ENCODE measurements at regions of chr3 and their contacts with region 1.

Region 1: DNA sequence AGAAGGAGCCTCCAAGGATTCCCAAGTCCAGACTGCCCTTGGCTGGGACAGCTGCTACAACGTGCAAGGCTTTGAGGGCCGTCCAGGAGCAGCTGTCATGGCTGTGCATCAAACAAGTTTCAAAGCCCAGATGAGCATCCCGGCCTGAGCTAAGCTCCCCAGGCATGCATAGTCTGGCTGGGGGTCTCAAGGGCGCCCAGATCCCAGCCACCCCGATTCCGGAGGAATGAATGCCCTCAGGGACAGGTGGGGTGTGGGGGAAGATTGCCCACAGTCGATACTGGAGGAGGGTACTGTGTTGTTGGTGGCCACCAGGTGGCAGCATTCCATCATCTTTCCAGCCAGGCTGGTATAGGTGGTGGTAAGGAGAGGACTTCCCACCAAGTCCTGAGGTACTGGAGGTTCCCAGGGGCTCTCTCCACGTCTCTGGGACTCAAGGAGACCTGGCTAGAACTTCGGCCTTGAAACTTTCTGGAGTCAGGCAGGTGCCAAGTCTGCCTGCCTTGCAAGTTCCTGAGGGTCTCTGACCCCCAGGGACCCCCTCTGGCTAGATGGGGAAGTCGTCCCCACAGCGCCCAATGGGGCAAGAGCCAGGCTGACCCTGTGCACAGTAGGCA is 32.8 kb downstream of the RBM5 start:
- DNase-seq: peak; percentile 77 to 83 (median 80)
- ATAC-seq: peak; percentile 96
- H3K4me3 ChIP-seq: no peak overlapping the region
- H3K27ac ChIP-seq: no peak overlapping the region
- H3K4me1 ChIP-seq: peaks cover 0 to 9% of the 10 kb centered on the region in 2 experiments; a peak in 2 of 5 replicates
- H3K27me3 ChIP-seq: no peaks in the 10 kb centered on the region
- CTCF ChIP-seq: peak; percentile 68 to 83 (median 80)
- EP300 ChIP-seq: no peak
- POLR2A ChIP-seq: peak; percentile 56; the same call in 1 of the 2 replicates
- RAD21 ChIP-seq: peak; percentile 56 to 81

Region 2: GRCh38 chr3:50136714-50137405 is 15.3 kb after region 1 on chr3:
- CTCF ChIA-PET with region 1: no interaction called
- POLR2A ChIA-PET with region 1: interaction called, 10 read pairs
- in situ Hi-C with region 1: no loop called
- intact Hi-C with region 1: no loop called
- DNase-seq: no peak
- ATAC-seq: no peak
- H3K4me3 ChIP-seq: no peak overlapping the region
- H3K27ac ChIP-seq: no peak overlapping the region
- H3K4me1 ChIP-seq: peaks cover 0 to 8% of the 10 kb centered on the region in 2 experiments; a peak in 2 of 5 replicates
- H3K27me3 ChIP-seq: peaks cover 0 to 13% of the 10 kb centered on the region in 2 experiments; a peak in 2 of 5 replicates
- CTCF ChIP-seq: no peak
- EP300 ChIP-seq: no peak
- POLR2A ChIP-seq: no peak
- RAD21 ChIP-seq: no peak

Region 3: DNA sequence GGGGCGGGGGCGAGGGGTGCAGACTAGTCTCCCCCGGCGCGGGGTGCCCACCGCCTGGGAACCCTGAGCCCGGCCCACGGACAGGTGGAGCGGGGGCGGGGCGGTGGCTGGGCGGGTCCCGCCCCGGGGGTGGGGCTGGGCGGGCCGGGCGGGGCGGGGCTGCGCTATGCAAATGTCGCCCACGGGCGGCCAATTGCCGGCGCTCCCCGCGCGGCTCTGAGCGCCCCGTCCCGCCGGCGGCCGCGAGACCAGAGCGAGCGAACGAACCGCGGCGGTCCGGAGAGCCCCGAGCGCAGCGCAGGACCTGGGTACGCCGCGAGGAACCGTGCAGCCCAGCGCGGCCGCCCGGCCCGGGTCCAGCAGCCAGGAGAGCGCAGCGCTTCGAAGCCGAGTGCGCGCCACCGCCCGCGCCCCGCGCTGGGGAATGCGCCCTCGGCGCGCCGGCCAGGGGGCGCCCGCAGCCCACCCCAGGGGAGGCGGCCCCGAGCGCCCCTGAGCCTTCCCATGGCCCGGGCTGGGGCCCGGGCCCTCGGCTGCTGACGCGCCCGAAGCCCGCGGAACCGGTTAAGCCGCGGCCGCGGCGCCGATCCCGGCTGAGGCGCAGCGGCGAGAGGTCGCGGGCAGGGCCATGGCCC is 33.4 kb after region 1 on chr3 and contains the start of gene SEMA3F:
- CTCF ChIA-PET with region 1: no interaction called
- POLR2A ChIA-PET with region 1: interaction called, 5 read pairs
- in situ Hi-C with region 1: no loop called
- intact Hi-C with region 1: loop called (anchors 1 kb)
- DNase-seq: peak; percentile 74 to 92 (median 92)
- ATAC-seq: peak; percentile 91
- H3K4me3 ChIP-seq: peak within 1 kb of the TSS; percentile 49
- H3K27ac ChIP-seq: no peak within 1 kb of the TSS
- H3K4me1 ChIP-seq: peaks cover 0 to 42% of the 10 kb centered on the region in 2 experiments; a peak in 3 of 5 replicates
- H3K27me3 ChIP-seq: no peaks in the 10 kb centered on the region
- CTCF ChIP-seq: peak in 2 of 3 experiments; percentile 28 to 35; a peak in 2 of 6 replicates
- EP300 ChIP-seq: no peak
- POLR2A ChIP-seq: no peak
- RAD21 ChIP-seq: peak in 1 of 2 experiments; percentile 50; a peak in 2 of 4 replicates
- polyA plus RNA-seq, gene SEMA3F: not detected

Region 4: GRCh38 chr3:50184242-50184978 is 62.9 kb after region 1 on chr3:
- CTCF ChIA-PET with region 1: interaction called, 34 read pairs
- POLR2A ChIA-PET with region 1: interaction called, 4 read pairs
- in situ Hi-C with region 1: loop called (anchors 5 kb)
- intact Hi-C with region 1: loop called (anchors 1 kb)
- DNase-seq: no peak
- ATAC-seq: no peak
- H3K4me3 ChIP-seq: no peak overlapping the region
- H3K27ac ChIP-seq: no peak overlapping the region
- H3K4me1 ChIP-seq: peaks cover 0 to 31% of the 10 kb centered on the region in 2 experiments; a peak in 3 of 5 replicates
- H3K27me3 ChIP-seq: no peaks in the 10 kb centered on the region
- CTCF ChIP-seq: no peak
- EP300 ChIP-seq: no peak
- POLR2A ChIP-seq: no peak
- RAD21 ChIP-seq: no peak

Region 5: GRCh38 chr3:50272911-50273693 is 151.6 kb after region 1 on chr3:
- CTCF ChIA-PET with region 1: no interaction called
- POLR2A ChIA-PET with region 1: no interaction called
- in situ Hi-C with region 1: no loop called
- intact Hi-C with region 1: loop called (anchors 5 kb)
- DNase-seq: peak; percentile 87 to 92 (median 88)
- ATAC-seq: peak; percentile 90
- H3K4me3 ChIP-seq: peak overlapping the region; percentile 28
- H3K27ac ChIP-seq: no peak overlapping the region
- H3K4me1 ChIP-seq: peaks cover 4 to 61% of the 10 kb centered on the region in 2 experiments; a peak in 3 of 5 replicates
- H3K27me3 ChIP-seq: no peaks in the 10 kb centered on the region
- CTCF ChIP-seq: peak; percentile 89 to 94 (median 94)
- EP300 ChIP-seq: no peak
- POLR2A ChIP-seq: no peak
- RAD21 ChIP-seq: peak; percentile 97 to 98

Measured in K562 (cell line).